Activated CD4-positive, alpha-beta T cell treated with anti-CD3 and anti-CD28 coated beads for 36 hours (primary cell): ENCODE measurements at regions of chr3 and their contacts with region 1.

Region 1: GRCh38 chr3:30768703-30769685 is 125.5 kb downstream of the GADL1 start:
- DNase-seq: peak; percentile 86
- ATAC-seq: peak; percentile 55
- H3K4me3 Mint-ChIP-seq: no peak overlapping the region
- H3K27ac Mint-ChIP-seq: no peak overlapping the region
- H3K4me1 Mint-ChIP-seq: no peaks in the 10 kb centered on the region
- H3K27me3 Mint-ChIP-seq: peaks cover 2% of the 10 kb centered on the region

Region 2: GRCh38 chr3:30042274-30042859 is 726.6 kb before region 1 on chr3:
- CTCF ChIA-PET with region 1: interaction called, 4 read pairs
- POLR2A ChIA-PET with region 1: no interaction called
- intact Hi-C with region 1: loop called in 1 of 2 experiments (anchors 5 kb)
- DNase-seq: peak; percentile 75
- ATAC-seq: no peak
- H3K4me3 Mint-ChIP-seq: no peak overlapping the region
- H3K27ac Mint-ChIP-seq: no peak overlapping the region
- H3K4me1 Mint-ChIP-seq: peaks cover 3% of the 10 kb centered on the region
- H3K27me3 Mint-ChIP-seq: peaks cover 13% of the 10 kb centered on the region

Region 3: GRCh38 chr3:30737743-30738499 is 31.1 kb before region 1 on chr3:
- CTCF ChIA-PET with region 1: no interaction called
- POLR2A ChIA-PET with region 1: no interaction called
- intact Hi-C with region 1: no loop called
- DNase-seq: no peak
- ATAC-seq: peak; percentile 79
- H3K4me3 Mint-ChIP-seq: no peak overlapping the region
- H3K27ac Mint-ChIP-seq: peak overlapping the region; percentile 26
- H3K4me1 Mint-ChIP-seq: peaks cover 37% of the 10 kb centered on the region
- H3K27me3 Mint-ChIP-seq: no peaks in the 10 kb centered on the region

Region 4: DNA sequence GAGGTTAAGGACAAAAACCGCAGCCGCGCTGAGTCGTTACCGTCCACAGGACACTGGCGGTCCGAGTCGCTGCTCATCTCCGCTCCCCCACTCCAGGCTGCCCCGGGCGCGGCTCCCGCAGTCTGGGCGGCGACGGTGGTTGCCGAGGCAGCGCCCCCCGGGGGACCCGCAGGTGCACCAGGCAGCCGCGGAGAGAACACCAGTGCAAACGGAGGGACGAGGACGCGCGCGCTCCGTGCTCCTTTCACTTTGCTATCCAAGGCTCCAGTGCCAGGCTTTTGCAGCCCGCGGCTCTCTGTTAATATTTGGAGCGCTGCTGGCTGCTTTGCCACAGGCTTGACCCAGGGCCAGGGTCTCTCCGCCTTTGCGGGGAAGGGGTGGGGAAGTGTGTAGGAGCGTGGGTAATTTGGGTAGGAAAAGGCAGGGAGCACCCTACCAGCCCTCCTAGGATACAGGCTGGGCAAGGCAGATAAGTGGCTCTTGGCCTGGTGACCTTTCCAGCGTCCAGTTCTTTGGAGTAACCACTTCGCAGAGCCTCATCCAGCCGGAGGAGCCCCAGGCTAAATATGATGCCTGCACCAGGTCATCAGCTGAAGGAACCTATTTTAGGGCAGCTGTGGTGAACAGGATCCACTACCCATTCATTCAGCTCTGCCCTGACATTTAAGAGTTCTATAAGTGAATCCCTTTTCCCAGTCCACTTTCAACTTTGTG is 125.7 kb after region 1 on chr3 and contains the start of gene GADL1:
- CTCF ChIA-PET with region 1: no interaction called
- POLR2A ChIA-PET with region 1: no interaction called
- intact Hi-C with region 1: loop called in 1 of 2 experiments (anchors 5 kb)
- DNase-seq: peak; percentile 48
- ATAC-seq: peak; percentile 53
- H3K4me3 Mint-ChIP-seq: peak within 1 kb of the TSS; percentile 57
- H3K27ac Mint-ChIP-seq: peak within 1 kb of the TSS; percentile 13
- H3K4me1 Mint-ChIP-seq: peaks cover 17% of the 10 kb centered on the region
- H3K27me3 Mint-ChIP-seq: peaks cover 22% of the 10 kb centered on the region
- total RNA-seq, gene GADL1: not detected

Region 5: DNA sequence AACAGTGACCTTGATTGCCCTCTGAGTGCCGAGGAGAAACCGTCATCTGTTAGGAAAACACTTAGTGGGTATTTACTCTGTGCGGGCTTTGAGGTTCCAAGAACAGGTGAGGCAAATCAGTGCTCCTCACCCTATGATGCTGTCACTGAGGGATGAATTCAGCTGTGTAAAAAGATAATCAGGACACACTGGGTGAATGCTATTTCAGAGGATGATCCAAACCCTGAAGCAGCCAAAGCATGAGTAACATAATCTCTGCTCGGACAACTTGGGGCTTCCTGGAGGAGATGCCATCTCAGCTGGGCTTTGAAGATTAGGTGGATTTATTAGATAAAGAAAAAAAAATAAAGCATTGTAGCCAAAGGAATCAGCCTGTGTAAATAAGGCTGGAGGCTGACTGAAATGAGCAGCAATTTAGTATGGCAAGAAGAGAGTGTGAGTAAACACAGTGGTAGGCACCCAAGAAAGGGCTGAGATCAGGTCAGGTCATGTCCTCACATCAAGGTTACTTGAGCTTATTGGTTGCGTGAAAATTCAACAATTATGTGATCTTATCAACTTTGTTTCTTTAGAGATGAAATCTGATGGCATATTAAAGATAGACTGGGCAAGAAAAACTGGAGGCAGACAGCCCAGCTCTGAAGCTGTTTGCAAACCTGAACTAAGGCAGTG is 136.1 kb after region 1 on chr3:
- CTCF ChIA-PET with region 1: no interaction called
- POLR2A ChIA-PET with region 1: no interaction called
- intact Hi-C with region 1: no loop called
- DNase-seq: no peak
- ATAC-seq: no peak
- H3K4me3 Mint-ChIP-seq: no peak overlapping the region
- H3K27ac Mint-ChIP-seq: no peak overlapping the region
- H3K4me1 Mint-ChIP-seq: no peaks in the 10 kb centered on the region
- H3K27me3 Mint-ChIP-seq: no peaks in the 10 kb centered on the region

Region 6: GRCh38 chr3:31356941-31357340 is 587.9 kb after region 1 on chr3:
- CTCF ChIA-PET with region 1: no interaction called
- POLR2A ChIA-PET with region 1: no interaction called
- intact Hi-C with region 1: loop called in 1 of 2 experiments (anchors 5 kb)
- DNase-seq: peak; percentile 23
- ATAC-seq: peak; percentile 17
- H3K4me3 Mint-ChIP-seq: no peak overlapping the region
- H3K27ac Mint-ChIP-seq: no peak overlapping the region
- H3K4me1 Mint-ChIP-seq: peaks cover 17% of the 10 kb centered on the region
- H3K27me3 Mint-ChIP-seq: no peaks in the 10 kb centered on the region